PC-3 (cell line): ENCODE measurements at regions of chr1 and their contacts with region 1.

Region 1: GRCh38 chr1:84156210-84156621 is 12.1 kb downstream of the PRKACB start:
- DNase-seq: peak; percentile 94
- ATAC-seq: peak; percentile 97
- H3K4me3 ChIP-seq: no peak overlapping the region
- H3K27ac ChIP-seq: peak overlapping the region; percentile 88
- H3K4me1 ChIP-seq: peaks cover 16% of the 10 kb centered on the region
- H3K27me3 ChIP-seq: no peaks in the 10 kb centered on the region
- CTCF ChIP-seq: no peak

Region 2: DNA sequence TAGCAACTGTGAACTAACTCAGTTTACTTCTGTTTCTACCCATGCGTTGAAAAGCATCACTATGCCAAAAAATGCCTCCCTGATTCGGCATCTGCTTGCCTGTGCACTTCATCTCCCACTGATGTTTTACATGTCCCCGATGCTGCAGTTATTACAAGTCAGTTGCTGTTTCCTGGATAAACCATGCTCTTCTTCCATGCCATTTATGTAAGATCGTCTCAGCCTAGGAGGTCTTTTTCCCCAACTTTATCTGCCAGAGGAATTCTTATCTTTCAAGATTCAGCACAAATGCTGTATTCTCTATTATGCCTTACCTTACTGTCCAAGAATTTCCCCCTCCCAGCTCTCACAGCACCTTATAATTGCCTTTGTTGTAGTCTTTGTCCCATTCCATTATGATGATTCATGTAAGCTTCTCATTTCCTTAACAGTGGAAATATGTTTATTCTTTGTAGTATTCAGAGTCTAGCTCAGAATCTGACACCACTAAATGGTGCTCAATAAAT is 17.9 kb after region 1 on chr1:
- CTCF ChIA-PET with region 1: no interaction called
- POLR2A ChIA-PET with region 1: no interaction called
- intact Hi-C with region 1: loop called (anchors 1 kb)
- DNase-seq: peak; percentile 85
- ATAC-seq: peak; percentile 99
- H3K4me3 ChIP-seq: no peak overlapping the region
- H3K27ac ChIP-seq: peak overlapping the region; percentile 31
- H3K4me1 ChIP-seq: peaks cover 11% of the 10 kb centered on the region
- H3K27me3 ChIP-seq: no peaks in the 10 kb centered on the region
- CTCF ChIP-seq: no peak

Region 3: GRCh38 chr1:84208935-84209334 is 52.7 kb after region 1 on chr1:
- CTCF ChIA-PET with region 1: no interaction called
- POLR2A ChIA-PET with region 1: no interaction called
- intact Hi-C with region 1: no loop called
- DNase-seq: peak; percentile 22
- ATAC-seq: no peak
- H3K4me3 ChIP-seq: no peak overlapping the region
- H3K27ac ChIP-seq: no peak overlapping the region
- H3K4me1 ChIP-seq: peaks cover 8% of the 10 kb centered on the region; the same call in 1 of the 2 replicates
- H3K27me3 ChIP-seq: no peaks in the 10 kb centered on the region
- CTCF ChIP-seq: no peak